Prostate gland (tissue), 2 donors: ENCODE measurements at regions of chrX and their contacts with region 1.

Region 1: GRCh38 chrX:20141281-20142220 is at the start of gene EIF1AX:
- DNase-seq: peak; percentile 95
- H3K4me3 ChIP-seq: peak within 1 kb of the TSS; percentile 57
- H3K27ac ChIP-seq: peak within 1 kb of the TSS; percentile 83 to 89
- H3K4me1 ChIP-seq: no peaks in the 10 kb centered on the region
- H3K27me3 ChIP-seq: no peaks in the 10 kb centered on the region
- CTCF ChIP-seq: no peak
- POLR2A ChIP-seq: peak; percentile 83
- total RNA-seq, gene EIF1AX: 28.0 to 51.3 TPM

Region 2: GRCh38 chrX:19904778-19905367 is 236.7 kb before region 1 on chrX:
- intact Hi-C with region 1: loop called (anchors 10 kb)
- DNase-seq: peak; percentile 23
- H3K4me3 ChIP-seq: no peak overlapping the region
- H3K27ac ChIP-seq: no peak overlapping the region
- H3K4me1 ChIP-seq: no peaks in the 10 kb centered on the region
- H3K27me3 ChIP-seq: no peaks in the 10 kb centered on the region
- CTCF ChIP-seq: peak in 2 of 4 experiments; percentile 64 to 76
- POLR2A ChIP-seq: no peak

Region 3: DNA sequence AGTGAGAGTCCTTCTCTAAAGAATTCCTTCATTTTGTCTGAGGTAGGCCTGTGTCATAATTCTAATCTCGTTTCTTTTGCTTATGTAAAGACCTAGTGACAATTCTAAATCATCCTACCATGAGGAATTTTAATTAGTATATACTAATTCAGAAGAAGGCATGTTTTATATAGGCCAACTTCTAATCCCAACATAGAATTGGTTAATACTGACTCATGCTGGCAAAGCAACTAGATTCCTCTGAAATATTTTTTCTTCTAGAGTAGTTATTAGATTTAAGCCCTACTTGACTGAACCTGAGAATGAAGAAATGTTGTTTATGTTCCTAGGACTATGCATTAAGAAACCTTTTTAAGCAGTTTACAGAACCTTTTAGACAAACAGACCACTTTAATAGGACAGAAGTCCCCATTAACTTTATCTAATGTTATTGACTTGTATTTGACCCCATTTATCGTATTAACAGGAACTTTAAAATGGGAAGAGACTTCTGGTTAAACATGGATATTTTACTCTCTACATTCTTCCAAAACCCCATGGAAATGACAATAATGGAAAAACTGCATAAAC is 56.2 kb after region 1 on chrX:
- intact Hi-C with region 1: no loop called
- DNase-seq: no peak
- H3K4me3 ChIP-seq: no peak overlapping the region
- H3K27ac ChIP-seq: no peak overlapping the region
- H3K4me1 ChIP-seq: no peaks in the 10 kb centered on the region
- H3K27me3 ChIP-seq: no peaks in the 10 kb centered on the region
- CTCF ChIP-seq: no peak
- POLR2A ChIP-seq: no peak

Region 4: DNA sequence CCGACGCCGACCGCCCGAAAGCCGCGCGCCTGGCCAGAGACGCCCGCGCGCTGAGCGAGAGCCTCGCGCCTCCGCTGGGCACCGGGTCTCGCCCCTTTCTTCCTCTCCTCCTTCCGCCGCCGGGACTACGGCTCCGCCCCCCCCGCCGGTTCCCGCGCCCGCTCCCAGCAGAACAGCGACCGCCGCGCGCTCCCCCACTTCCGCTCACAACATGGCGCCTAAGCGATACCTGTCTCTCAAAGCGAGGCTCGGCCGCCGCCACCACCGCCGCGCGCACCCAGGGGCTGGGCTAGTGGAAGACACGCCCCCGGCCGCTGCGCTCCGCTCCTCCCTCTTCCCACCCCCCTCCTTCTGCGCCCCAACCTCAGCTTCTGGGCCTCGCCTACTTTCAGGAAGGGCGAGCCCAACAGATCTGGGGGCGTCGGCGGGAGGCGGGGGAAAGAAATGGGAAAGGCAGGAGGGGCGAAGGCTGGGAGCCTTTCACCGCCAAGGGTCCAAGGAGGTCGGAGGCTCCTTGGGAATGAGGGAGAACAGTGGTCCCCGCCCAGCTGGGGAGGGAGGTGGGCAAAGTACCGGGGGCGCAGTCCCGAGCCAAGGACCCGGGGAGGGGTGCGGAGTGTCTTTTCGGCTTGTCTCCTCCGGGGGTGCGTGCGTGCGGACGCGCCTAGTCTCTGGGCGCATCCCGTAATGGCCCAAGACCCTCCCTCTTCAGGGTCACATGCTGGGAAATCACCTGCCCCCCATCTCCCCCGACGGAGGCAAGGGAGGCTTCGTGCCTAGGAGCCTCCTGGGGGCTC is 125.5 kb after region 1 on chrX and contains the start of gene RPS6KA3:
- intact Hi-C with region 1: loop called (anchors 5 kb)
- DNase-seq: peak; percentile 92
- H3K4me3 ChIP-seq: peak within 1 kb of the TSS; percentile 57 to 58
- H3K27ac ChIP-seq: peak within 1 kb of the TSS; percentile 85 to 88
- H3K4me1 ChIP-seq: no peaks in the 10 kb centered on the region
- H3K27me3 ChIP-seq: no peaks in the 10 kb centered on the region
- CTCF ChIP-seq: no peak
- POLR2A ChIP-seq: peak; percentile 72
- total RNA-seq, gene RPS6KA3: 19.8 to 52.8 TPM

Region 5: GRCh38 chrX:20527558-20528011 is 386.0 kb after region 1 on chrX:
- intact Hi-C with region 1: no loop called
- DNase-seq: no peak
- H3K4me3 ChIP-seq: no peak overlapping the region
- H3K27ac ChIP-seq: no peak overlapping the region
- H3K4me1 ChIP-seq: no peaks in the 10 kb centered on the region
- H3K27me3 ChIP-seq: no peaks in the 10 kb centered on the region
- CTCF ChIP-seq: peak; percentile 32 to 63 (median 50)
- POLR2A ChIP-seq: no peak